H1 (cell line): ENCODE measurements at regions of chr5 and their contacts with region 1.

Region 1: GRCh38 chr5:151420127-151420526 is 27.3 kb upstream of the SLC36A1 start:
- DNase-seq: no peak
- H3K4me3 ChIP-seq: no peak overlapping the region
- H3K27ac ChIP-seq: no peak overlapping the region
- H3K4me1 ChIP-seq: peaks cover 0 to 5% (median 0%) of the 10 kb centered on the region in 4 experiments; a peak in 2 of 7 replicates
- H3K27me3 ChIP-seq: no peaks in the 10 kb centered on the region
- CTCF ChIP-seq: no peak
- EP300 ChIP-seq: no peak
- POLR2A ChIP-seq: no peak
- RAD21 ChIP-seq: no peak

Region 2: DNA sequence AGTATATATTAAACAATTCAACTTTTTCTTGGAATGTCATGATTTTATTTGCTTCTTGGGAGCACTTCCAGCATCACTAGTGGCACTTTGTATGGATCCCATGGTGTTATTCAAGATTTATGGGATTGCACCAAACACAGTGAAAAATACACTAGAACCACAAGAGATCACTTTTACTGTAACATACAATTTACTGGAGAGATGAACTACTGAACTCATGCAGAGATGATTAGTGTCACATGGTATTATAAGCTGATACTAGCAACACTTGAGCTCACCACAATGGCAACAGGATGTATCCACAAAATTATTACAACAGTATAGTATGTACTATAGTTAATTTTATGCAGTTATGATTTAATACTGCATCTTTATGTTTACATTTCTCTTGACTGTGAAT is 56.5 kb before region 1 on chr5:
- CTCF ChIA-PET with region 1: no interaction called
- POLR2A ChIA-PET with region 1: no interaction called
- DNase-seq: no peak
- H3K4me3 ChIP-seq: no peak overlapping the region
- H3K27ac ChIP-seq: no peak overlapping the region
- H3K4me1 ChIP-seq: peaks cover 0 to 4% (median 3%) of the 10 kb centered on the region in 4 experiments; a peak in 3 of 7 replicates
- H3K27me3 ChIP-seq: no peaks in the 10 kb centered on the region
- CTCF ChIP-seq: no peak
- EP300 ChIP-seq: no peak
- POLR2A ChIP-seq: no peak
- RAD21 ChIP-seq: no peak

Region 3: DNA sequence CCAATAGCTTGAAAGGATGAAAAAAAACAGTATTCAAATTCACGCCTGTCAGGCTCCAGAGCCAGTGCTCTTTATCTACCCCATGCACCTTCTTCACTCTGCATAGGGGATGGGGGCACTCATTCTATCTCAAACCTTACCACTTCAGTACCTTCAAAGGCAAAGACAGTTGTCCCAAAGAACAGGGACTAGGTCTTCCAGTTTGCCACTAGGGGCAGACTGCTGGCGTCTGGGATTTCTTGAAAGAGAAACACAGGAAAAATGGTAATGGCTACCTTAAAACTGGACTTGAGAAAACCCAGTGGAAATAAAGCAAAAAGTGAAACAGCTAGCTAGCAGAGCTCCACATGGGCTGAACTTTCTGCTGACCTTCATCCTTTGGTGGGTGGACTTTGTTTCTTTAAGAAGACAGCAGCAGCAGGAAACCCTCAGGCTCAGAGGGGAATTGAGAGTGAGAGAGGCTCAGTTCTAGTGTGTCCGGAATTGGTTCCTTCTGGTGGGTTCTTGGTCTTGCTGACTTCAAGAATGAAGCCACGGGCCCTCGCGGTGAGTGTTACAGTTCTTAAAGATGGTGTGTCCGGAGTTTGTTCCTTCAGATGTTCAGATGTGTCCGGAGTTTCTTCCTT is 13.7 kb before region 1 on chr5:
- CTCF ChIA-PET with region 1: interaction called, 10 read pairs
- POLR2A ChIA-PET with region 1: no interaction called
- DNase-seq: no peak
- H3K4me3 ChIP-seq: no peak overlapping the region
- H3K27ac ChIP-seq: no peak overlapping the region
- H3K4me1 ChIP-seq: peaks cover 3 to 12% (median 8%) of the 10 kb centered on the region in 4 experiments; a peak in 6 of 7 replicates
- H3K27me3 ChIP-seq: no peaks in the 10 kb centered on the region
- CTCF ChIP-seq: peak; percentile 41 to 75 (median 42); a peak in 3 of 4 replicates
- EP300 ChIP-seq: no peak
- POLR2A ChIP-seq: no peak
- RAD21 ChIP-seq: peak in 1 of 2 experiments; percentile 7; a peak in 2 of 4 replicates